ENCODE measurements at regions of chr3 and their contacts with region 1.

Region 1: GRCh38 chr3:124761250-124761796 is 31.1 kb downstream of the UMPS start:
- DNase-seq: peak; percentile 83 to 94 (median 90)
- H3K4me3 ChIP-seq: no peak overlapping the region
- H3K27ac ChIP-seq: peak overlapping the region in 1 of 2 donors; percentile 33
- H3K4me1 ChIP-seq: no peaks in the 10 kb centered on the region
- H3K27me3 ChIP-seq: no peaks in the 10 kb centered on the region
- CTCF ChIP-seq: peak; percentile 89 to 96 (median 94)
- EP300 ChIP-seq: no peak
- POLR2A ChIP-seq: no peak

Region 2: GRCh38 chr3:124905849-124906248 is 144.5 kb after region 1 on chr3:
- intact Hi-C with region 1: loop called (anchors 2 kb)
- DNase-seq: no peak
- H3K4me3 ChIP-seq: no peak overlapping the region
- H3K27ac ChIP-seq: no peak overlapping the region
- H3K4me1 ChIP-seq: peaks cover 1% of the 10 kb centered on the region
- H3K27me3 ChIP-seq: no peaks in the 10 kb centered on the region
- CTCF ChIP-seq: no peak
- EP300 ChIP-seq: no peak
- POLR2A ChIP-seq: no peak